GM12878 (cell line): ENCODE measurements at regions of chr2 and their contacts with region 1.

Region 1: GRCh38 chr2:12110074-12110473 is 363.6 kb downstream of the LPIN1 start:
- DNase-seq: no peak
- ATAC-seq: no peak; the same call in 1 of the 3 replicates
- H3K4me3 ChIP-seq: no peak overlapping the region
- H3K27ac ChIP-seq: no peak overlapping the region
- H3K4me1 ChIP-seq: peaks cover 10% of the 10 kb centered on the region
- H3K27me3 ChIP-seq: no peaks in the 10 kb centered on the region
- CTCF ChIP-seq: no peak
- EP300 ChIP-seq: no peak
- POLR2A ChIP-seq: no peak
- RAD21 ChIP-seq: no peak

Region 2: DNA sequence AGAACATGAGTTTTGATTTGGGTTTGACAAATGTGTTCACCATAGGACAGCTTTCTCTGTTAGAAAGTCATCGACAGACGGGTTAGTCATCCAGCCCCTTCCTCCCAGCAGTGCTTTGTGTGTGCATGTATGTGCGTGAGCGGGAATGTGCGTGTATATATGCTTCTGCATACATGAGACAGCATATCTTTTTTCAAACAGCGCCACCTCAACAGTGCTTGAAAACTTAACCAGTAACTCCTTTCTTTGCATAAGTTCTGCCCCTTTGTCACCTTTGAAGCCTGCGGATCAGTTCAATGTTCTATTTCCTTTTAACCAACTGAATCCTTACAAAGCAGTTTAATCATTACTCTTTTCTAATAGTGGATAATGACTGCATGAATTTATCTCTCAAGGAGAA is 12.2 kb before region 1 on chr2:
- CTCF ChIA-PET with region 1: interaction called, 7 read pairs
- POLR2A ChIA-PET with region 1: interaction called, 3 read pairs
- RAD21 ChIA-PET with region 1: no interaction called
- SMC1A ChIA-PET with region 1: interaction called, 13 read pairs
- in situ Hi-C with region 1: no loop called
- intact Hi-C with region 1: no loop called
- DNase-seq: no peak
- ATAC-seq: no peak
- H3K4me3 ChIP-seq: no peak overlapping the region
- H3K27ac ChIP-seq: no peak overlapping the region
- H3K4me1 ChIP-seq: no peaks in the 10 kb centered on the region
- H3K27me3 ChIP-seq: no peaks in the 10 kb centered on the region
- CTCF ChIP-seq: no peak
- EP300 ChIP-seq: no peak
- POLR2A ChIP-seq: no peak
- RAD21 ChIP-seq: no peak

Region 3: DNA sequence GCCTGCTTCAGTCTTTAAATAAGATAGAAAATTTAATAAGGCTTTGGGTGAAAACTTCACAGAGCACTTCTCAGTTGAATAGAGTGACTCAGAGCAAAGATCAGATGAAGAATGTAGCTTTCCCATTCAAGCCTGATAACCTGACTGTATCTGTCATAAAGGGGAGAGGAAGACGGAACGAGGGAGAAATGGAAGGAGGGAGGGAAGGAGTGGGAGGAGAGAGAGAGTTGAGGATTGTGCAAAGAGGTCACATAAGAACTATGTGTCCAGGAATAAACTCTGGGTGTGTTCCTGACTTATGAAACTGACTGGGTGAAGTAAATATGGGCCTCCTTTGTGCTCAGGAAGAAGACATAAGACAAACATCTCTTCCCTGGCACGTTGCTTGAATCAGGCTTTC is 21.9 kb after region 1 on chr2:
- CTCF ChIA-PET with region 1: no interaction called
- POLR2A ChIA-PET with region 1: no interaction called
- RAD21 ChIA-PET with region 1: no interaction called
- SMC1A ChIA-PET with region 1: no interaction called
- in situ Hi-C with region 1: no loop called
- intact Hi-C with region 1: no loop called
- DNase-seq: no peak
- ATAC-seq: no peak
- H3K4me3 ChIP-seq: no peak overlapping the region
- H3K27ac ChIP-seq: no peak overlapping the region
- H3K4me1 ChIP-seq: no peaks in the 10 kb centered on the region; the same call in 1 of the 2 replicates
- H3K27me3 ChIP-seq: no peaks in the 10 kb centered on the region
- CTCF ChIP-seq: no peak
- EP300 ChIP-seq: no peak
- POLR2A ChIP-seq: no peak
- RAD21 ChIP-seq: no peak

Region 4: GRCh38 chr2:12303181-12304030 is 193.3 kb after region 1 on chr2:
- CTCF ChIA-PET with region 1: no interaction called
- POLR2A ChIA-PET with region 1: no interaction called
- RAD21 ChIA-PET with region 1: no interaction called
- SMC1A ChIA-PET with region 1: no interaction called
- in situ Hi-C with region 1: no loop called
- intact Hi-C with region 1: no loop called
- DNase-seq: no peak
- ATAC-seq: peak; percentile 64
- H3K4me3 ChIP-seq: no peak overlapping the region
- H3K27ac ChIP-seq: no peak overlapping the region
- H3K4me1 ChIP-seq: peaks cover 6% of the 10 kb centered on the region
- H3K27me3 ChIP-seq: no peaks in the 10 kb centered on the region
- CTCF ChIP-seq: no peak
- EP300 ChIP-seq: no peak
- POLR2A ChIP-seq: no peak
- RAD21 ChIP-seq: no peak